ENCODE measurements at regions of chrX and their contacts with region 1.

Region 1: DNA sequence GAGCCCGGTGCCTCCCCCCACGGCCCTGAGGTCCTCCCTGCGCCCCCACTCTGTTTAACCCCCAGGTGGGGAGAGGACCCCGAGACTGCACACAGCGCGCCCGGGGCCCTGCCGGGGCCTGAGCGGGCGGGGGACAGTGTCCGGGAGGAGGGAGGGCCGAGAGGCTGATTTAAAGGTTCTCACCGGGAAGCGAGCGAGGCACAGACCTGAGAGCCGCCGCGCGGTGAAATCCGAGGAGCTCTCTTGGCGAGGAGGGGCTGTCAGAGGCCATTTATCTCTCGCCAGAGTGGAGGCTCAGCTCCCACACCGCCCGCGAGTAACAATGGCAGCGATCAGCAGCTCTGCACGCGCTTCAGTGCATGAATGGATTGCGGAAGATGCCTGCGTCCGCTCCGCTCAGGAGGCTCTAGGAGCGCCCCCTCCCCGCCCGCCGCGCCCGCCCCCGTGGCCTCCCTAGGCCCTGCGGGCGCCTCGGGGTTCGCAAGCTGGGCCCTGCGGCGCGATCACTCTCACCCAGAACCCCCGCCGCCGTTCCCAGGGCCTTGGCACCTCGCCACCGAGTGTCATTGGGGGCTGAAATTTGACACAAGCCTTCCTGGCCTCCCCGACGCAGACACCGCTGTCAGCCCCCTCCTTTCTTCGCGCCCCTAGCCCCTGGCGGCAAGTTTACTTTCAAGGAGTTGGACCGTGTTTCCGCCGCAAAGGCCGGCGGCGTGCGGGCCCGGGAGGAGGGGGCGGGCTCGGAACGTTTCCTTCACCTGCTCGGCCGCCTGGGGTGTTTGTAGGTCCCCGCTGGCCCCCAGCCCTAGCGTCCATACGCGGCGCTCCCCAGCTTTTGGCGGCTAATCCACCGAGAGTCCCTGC is 48.7 kb upstream of the BCOR start:
- DNase-seq: peak; percentile 57 to 63
- H3K4me3 ChIP-seq: peak overlapping the region in 2 of 3 donors; percentile 27 to 41
- H3K27ac ChIP-seq: peak overlapping the region in 1 of 3 donors; percentile 36
- H3K4me1 ChIP-seq: peaks cover 21 to 28% of the 10 kb centered on the region in 2 donors
- H3K27me3 ChIP-seq: peaks cover 7% of the 10 kb centered on the region
- CTCF ChIP-seq: no peak
- POLR2A ChIP-seq: peak in 1 of 2 donors; percentile 43

Region 2: DNA sequence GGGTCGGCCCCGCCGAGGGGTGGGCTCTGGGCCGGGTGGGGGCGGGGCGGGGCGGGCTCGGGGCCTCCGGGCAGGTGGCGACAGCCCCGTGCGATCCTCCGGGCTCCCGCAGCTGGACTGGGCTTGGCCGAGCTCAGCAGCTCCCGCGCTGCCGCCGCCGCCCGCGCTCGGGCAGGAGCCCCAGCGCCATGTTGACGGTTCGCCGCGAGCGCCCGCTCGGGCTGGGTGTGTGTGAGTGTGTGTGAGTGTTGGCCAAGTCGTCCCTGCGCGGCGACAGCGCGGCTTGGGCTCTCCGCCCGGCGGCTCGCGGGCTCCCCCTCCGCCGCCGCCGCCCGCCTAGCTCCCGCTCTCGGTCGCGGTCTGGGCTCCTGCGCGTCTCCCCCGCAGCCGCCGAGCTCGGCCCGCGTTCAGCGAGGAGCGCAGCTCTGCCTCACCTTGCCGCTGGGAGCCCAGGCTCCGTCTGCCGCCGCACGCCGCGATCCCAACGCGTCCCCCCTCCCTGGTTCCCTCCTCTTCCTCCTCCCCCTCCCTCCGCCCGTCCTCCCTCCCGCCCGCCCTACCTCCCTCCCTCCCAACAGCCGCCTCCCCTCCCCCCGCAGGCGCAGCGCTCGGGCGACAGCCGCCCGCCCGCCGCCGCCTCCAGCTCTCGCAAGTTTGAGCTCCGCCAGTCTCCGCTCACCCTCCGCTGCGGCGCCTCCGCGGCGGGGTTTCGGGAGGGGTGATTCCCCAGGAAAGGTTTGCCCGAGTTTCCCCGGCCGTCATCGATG is 48.8 kb before region 1 on chrX and contains the start of gene BCOR:
- intact Hi-C with region 1: loop called (anchors 5 kb)
- DNase-seq: peak; percentile 72 to 78
- H3K4me3 ChIP-seq: peak within 1 kb of the TSS in 2 of 3 donors; percentile 39 to 54
- H3K27ac ChIP-seq: peak within 1 kb of the TSS; percentile 67 to 80 (median 75)
- H3K4me1 ChIP-seq: peaks cover 8 to 19% of the 10 kb centered on the region in 2 donors
- H3K27me3 ChIP-seq: peaks cover 6% of the 10 kb centered on the region
- CTCF ChIP-seq: no peak
- POLR2A ChIP-seq: peak; percentile 67 to 78
- total RNA-seq, gene BCOR: 30.9 to 67.4 (median 42.4) TPM